PC-3 (cell line): ENCODE measurements at regions of chr19 and their contacts with region 1.

Region 1: GRCh38 chr19:46134527-46134926 is 10.0 kb upstream of the IGFL3 start:
- DNase-seq: no peak
- ATAC-seq: no peak
- H3K4me3 ChIP-seq: no peak overlapping the region
- H3K27ac ChIP-seq: no peak overlapping the region
- H3K4me1 ChIP-seq: peaks cover 11% of the 10 kb centered on the region; the same call in 1 of the 2 replicates
- H3K27me3 ChIP-seq: peaks cover 9% of the 10 kb centered on the region; the same call in 1 of the 2 replicates
- CTCF ChIP-seq: no peak

Region 2: GRCh38 chr19:44576843-44577565 is 1557.5 kb before region 1 on chr19:
- CTCF ChIA-PET with region 1: no interaction called
- POLR2A ChIA-PET with region 1: no interaction called
- intact Hi-C with region 1: no loop called
- DNase-seq: peak; percentile 71
- ATAC-seq: peak; percentile 87
- H3K4me3 ChIP-seq: no peak overlapping the region
- H3K27ac ChIP-seq: no peak overlapping the region
- H3K4me1 ChIP-seq: peaks cover 15% of the 10 kb centered on the region
- H3K27me3 ChIP-seq: no peaks in the 10 kb centered on the region
- CTCF ChIP-seq: peak; percentile 76

Region 3: GRCh38 chr19:46181388-46181779 is 46.9 kb after region 1 on chr19:
- CTCF ChIA-PET with region 1: no interaction called
- POLR2A ChIA-PET with region 1: no interaction called
- intact Hi-C with region 1: no loop called
- DNase-seq: peak; percentile 52
- ATAC-seq: peak; percentile 71
- H3K4me3 ChIP-seq: peak overlapping the region; percentile 31; the same call in 1 of the 2 replicates
- H3K27ac ChIP-seq: peak overlapping the region; percentile 95
- H3K4me1 ChIP-seq: peaks cover 28% of the 10 kb centered on the region
- H3K27me3 ChIP-seq: no peaks in the 10 kb centered on the region
- CTCF ChIP-seq: no peak

Region 4: GRCh38 chr19:46308510-46308909 is 174.0 kb after region 1 on chr19:
- CTCF ChIA-PET with region 1: no interaction called
- POLR2A ChIA-PET with region 1: interaction called, 14 read pairs
- intact Hi-C with region 1: no loop called
- DNase-seq: no peak
- ATAC-seq: no peak
- H3K4me3 ChIP-seq: no peak overlapping the region
- H3K27ac ChIP-seq: no peak overlapping the region
- H3K4me1 ChIP-seq: no peaks in the 10 kb centered on the region
- H3K27me3 ChIP-seq: no peaks in the 10 kb centered on the region
- CTCF ChIP-seq: no peak